K562 (cell line): ENCODE measurements at regions of chr7 and their contacts with region 1.

Region 1: GRCh38 chr7:148698397-148699023 is at the start of gene CUL1:
- DNase-seq: peak; percentile 89 to 93 (median 93)
- ATAC-seq: peak; percentile 78
- H3K4me3 ChIP-seq: peak within 1 kb of the TSS; percentile 69
- H3K27ac ChIP-seq: peak within 1 kb of the TSS; percentile 88
- H3K4me1 ChIP-seq: peaks cover 27 to 47% of the 10 kb centered on the region in 2 experiments
- H3K27me3 ChIP-seq: no peaks in the 10 kb centered on the region
- CTCF ChIP-seq: no peak
- EP300 ChIP-seq: no peak; the same call in none of the 2 replicates
- POLR2A ChIP-seq: peak; percentile 76
- RAD21 ChIP-seq: no peak
- polyA plus RNA-seq, gene CUL1: 31.5 to 43.8 TPM

Region 2: DNA sequence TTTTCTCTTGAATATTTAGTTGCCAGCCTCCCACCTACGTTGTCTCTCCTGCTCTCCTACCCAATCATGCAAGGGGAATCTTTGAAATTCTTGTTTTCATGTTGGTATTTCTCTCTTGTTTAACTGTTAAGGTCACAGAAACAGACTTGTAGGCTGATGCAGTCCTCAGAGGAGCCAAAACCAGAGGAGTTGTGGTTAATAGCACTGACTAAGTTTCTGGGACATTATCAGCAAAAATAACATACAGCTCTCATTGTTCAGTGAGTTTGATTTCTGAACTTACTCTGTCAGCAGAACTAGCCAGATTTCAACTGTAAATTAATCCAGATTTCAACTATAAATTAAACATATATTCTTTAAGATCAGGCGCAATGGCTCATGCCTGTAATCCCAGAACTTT is 11.0 kb before region 1 on chr7:
- CTCF ChIA-PET with region 1: no interaction called
- POLR2A ChIA-PET with region 1: interaction called, 10 read pairs
- in situ Hi-C with region 1: no loop called
- intact Hi-C with region 1: no loop called
- DNase-seq: no peak
- ATAC-seq: no peak
- H3K4me3 ChIP-seq: no peak overlapping the region
- H3K27ac ChIP-seq: no peak overlapping the region
- H3K4me1 ChIP-seq: peaks cover 0 to 4% of the 10 kb centered on the region in 2 experiments; a peak in 1 of 5 replicates
- H3K27me3 ChIP-seq: peaks cover 22 to 23% of the 10 kb centered on the region in 2 experiments; a peak in 4 of 5 replicates
- CTCF ChIP-seq: no peak
- EP300 ChIP-seq: no peak
- POLR2A ChIP-seq: no peak
- RAD21 ChIP-seq: no peak

Region 3: GRCh38 chr7:148722340-148723165 is 24.0 kb after region 1 on chr7:
- CTCF ChIA-PET with region 1: no interaction called
- POLR2A ChIA-PET with region 1: interaction called, 44 read pairs
- in situ Hi-C with region 1: no loop called
- intact Hi-C with region 1: no loop called
- DNase-seq: no peak
- ATAC-seq: peak; percentile 27
- H3K4me3 ChIP-seq: no peak overlapping the region
- H3K27ac ChIP-seq: no peak overlapping the region
- H3K4me1 ChIP-seq: peaks cover 19 to 35% of the 10 kb centered on the region in 2 experiments
- H3K27me3 ChIP-seq: no peaks in the 10 kb centered on the region
- CTCF ChIP-seq: no peak
- EP300 ChIP-seq: no peak
- POLR2A ChIP-seq: no peak
- RAD21 ChIP-seq: no peak

Region 4: DNA sequence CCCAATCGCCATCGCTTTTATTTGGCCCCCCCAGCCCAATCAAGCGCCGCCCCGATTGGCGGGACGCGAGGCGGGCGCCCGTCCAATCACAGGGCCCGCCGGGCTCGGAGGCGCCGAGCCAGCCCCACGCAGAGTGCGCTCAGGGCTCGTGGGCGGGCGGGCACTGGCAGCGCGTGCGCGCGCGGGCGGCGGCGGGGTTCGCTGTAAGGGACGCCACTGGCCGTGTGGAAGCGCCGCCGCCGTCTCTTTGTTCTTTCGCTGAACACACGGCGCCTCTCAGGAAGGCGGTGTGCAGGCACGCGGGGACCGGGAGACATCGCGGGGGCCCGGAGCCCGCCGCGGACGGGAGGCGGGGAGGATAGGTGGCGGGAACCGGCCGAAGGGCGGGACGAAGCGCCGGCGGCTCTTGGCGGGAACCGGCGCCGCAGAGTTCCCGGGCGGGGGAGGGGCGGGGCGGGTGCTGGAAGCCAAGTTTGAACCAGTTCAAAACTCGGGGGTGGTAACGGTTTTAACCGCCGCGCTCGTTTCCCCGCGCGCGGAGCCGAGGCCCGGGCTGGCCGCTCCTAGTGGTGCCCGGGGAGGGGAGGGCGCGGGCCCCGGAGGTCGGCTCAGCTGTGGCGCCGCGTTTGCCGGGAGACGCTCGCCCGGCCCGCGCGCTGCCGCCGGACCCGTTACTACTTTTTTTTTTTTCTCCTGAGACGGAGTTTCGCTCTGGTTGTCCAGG is 186.0 kb after region 1 on chr7:
- CTCF ChIA-PET with region 1: no interaction called
- POLR2A ChIA-PET with region 1: interaction called, 4 read pairs
- in situ Hi-C with region 1: no loop called
- intact Hi-C with region 1: loop called (anchors 2 kb)
- DNase-seq: peak; percentile 99 to 100 (median 99)
- ATAC-seq: peak; percentile 92
- H3K4me3 ChIP-seq: peak overlapping the region; percentile 96
- H3K27ac ChIP-seq: peak overlapping the region; percentile 98
- H3K4me1 ChIP-seq: peaks cover 9 to 23% of the 10 kb centered on the region in 2 experiments; a peak in 4 of 5 replicates
- H3K27me3 ChIP-seq: no peaks in the 10 kb centered on the region
- CTCF ChIP-seq: no peak
- EP300 ChIP-seq: peak; percentile 81
- POLR2A ChIP-seq: peak; percentile 94
- RAD21 ChIP-seq: peak in 1 of 2 experiments; percentile 22; a peak in 1 of 4 replicates

Region 5: DNA sequence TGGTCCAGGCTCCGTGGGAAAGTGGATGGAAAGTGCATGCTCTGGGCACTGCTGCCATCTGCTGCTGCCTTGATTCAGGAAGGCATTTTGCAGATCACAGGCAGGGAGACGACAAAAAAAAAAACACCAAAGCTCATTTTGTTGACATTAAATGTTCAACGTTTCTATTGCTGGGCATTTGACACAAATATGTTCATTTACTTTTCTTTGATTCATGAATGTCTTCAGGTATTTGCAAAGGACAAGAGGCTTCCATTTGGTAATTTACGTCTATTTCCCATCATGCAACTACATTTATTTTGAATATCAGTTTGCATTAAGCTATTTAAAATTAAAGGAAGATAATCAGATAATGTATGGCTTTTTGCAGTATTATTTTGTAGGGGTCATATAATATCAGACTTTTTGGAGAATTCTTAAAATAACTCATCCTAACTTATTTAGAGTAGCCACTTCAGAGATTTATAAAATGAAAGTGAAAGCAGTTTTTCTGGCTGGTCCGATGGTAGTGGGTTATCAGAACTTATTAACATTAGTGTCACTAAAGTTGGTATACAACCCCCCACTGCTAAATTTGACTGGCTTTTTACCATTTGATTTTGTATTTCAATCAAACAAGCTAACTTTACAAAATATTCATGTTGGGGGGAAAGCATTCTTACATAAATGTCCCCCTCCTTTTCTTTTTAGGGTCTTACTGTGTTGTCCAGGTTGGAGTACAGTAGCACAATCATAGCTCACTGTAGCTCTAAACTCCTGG is 264.5 kb after region 1 on chr7:
- CTCF ChIA-PET with region 1: interaction called, 3 read pairs
- POLR2A ChIA-PET with region 1: interaction called, 4 read pairs
- in situ Hi-C with region 1: no loop called
- intact Hi-C with region 1: loop called (anchors 5 kb)
- DNase-seq: peak; percentile 61 to 86 (median 72)
- ATAC-seq: peak; percentile 65
- H3K4me3 ChIP-seq: peak overlapping the region; percentile 49
- H3K27ac ChIP-seq: peak overlapping the region; percentile 62
- H3K4me1 ChIP-seq: peaks cover 16 to 32% of the 10 kb centered on the region in 2 experiments; a peak in 4 of 5 replicates
- H3K27me3 ChIP-seq: no peaks in the 10 kb centered on the region
- CTCF ChIP-seq: peak; percentile 89 to 98 (median 97)
- EP300 ChIP-seq: peak; percentile 41; the same call in 1 of the 2 replicates
- POLR2A ChIP-seq: no peak
- RAD21 ChIP-seq: peak; percentile 95 to 96